A673 (cell line): ENCODE measurements at regions of chr9 and their contacts with region 1.

Region 1: GRCh38 chr9:110452227-110452801 is 114.7 kb upstream of the TXNDC8 start:
- DNase-seq: peak; percentile 17
- H3K4me3 ChIP-seq: no peak overlapping the region
- H3K27ac ChIP-seq: no peak overlapping the region
- H3K4me1 ChIP-seq: no peaks in the 10 kb centered on the region
- H3K27me3 ChIP-seq: no peaks in the 10 kb centered on the region
- CTCF ChIP-seq: peak; percentile 69

Region 2: GRCh38 chr9:110278080-110278707 is 174.1 kb before region 1 on chr9:
- CTCF ChIA-PET with region 1: no interaction called
- POLR2A ChIA-PET with region 1: no interaction called
- intact Hi-C with region 1: no loop called
- DNase-seq: no peak
- H3K4me3 ChIP-seq: no peak overlapping the region
- H3K27ac ChIP-seq: no peak overlapping the region
- H3K4me1 ChIP-seq: no peaks in the 10 kb centered on the region
- H3K27me3 ChIP-seq: no peaks in the 10 kb centered on the region
- CTCF ChIP-seq: no peak

Region 3: DNA sequence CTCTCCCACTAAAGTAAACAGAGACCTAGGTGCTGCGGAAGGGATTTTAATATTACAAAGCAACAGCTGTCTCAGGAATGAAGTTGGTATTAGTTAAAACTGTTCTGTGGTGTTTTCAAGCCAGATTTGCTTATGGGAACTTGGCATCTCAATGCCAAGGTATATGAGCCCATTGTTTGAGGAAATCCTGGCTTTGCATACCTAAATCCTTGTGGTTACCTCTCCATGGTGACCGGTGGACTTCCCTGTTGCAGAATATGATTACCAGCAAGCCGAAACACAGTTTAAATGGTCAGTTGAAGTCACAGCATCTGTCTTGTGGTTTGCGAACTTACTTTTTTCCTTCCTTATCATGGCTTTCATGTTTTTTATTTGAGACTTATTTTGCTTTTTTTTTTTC is 52.3 kb before region 1 on chr9:
- CTCF ChIA-PET with region 1: no interaction called
- POLR2A ChIA-PET with region 1: no interaction called
- intact Hi-C with region 1: no loop called
- DNase-seq: no peak
- H3K4me3 ChIP-seq: no peak overlapping the region
- H3K27ac ChIP-seq: no peak overlapping the region
- H3K4me1 ChIP-seq: no peaks in the 10 kb centered on the region
- H3K27me3 ChIP-seq: peaks cover 10% of the 10 kb centered on the region
- CTCF ChIP-seq: no peak

Region 4: DNA sequence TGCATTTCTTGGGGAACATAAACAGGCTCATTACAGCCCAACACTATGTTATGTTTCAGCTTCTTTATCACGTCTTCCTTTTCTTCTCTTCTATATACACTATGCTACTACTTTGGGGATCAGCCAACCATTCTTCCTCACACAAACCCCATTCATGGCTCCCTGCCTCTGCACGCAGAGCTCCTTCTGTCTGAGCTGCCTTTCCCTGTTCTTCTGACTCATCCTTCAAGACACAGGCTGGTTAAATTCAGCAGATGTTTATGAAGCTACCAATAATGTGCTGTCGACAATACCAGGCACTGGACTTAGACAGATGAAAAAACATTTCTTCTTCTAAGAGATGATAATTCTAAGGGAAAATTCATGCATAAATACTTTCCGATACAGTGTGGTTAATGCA is 12.1 kb before region 1 on chr9:
- CTCF ChIA-PET with region 1: interaction called, 13 read pairs
- POLR2A ChIA-PET with region 1: no interaction called
- intact Hi-C with region 1: no loop called
- DNase-seq: no peak
- H3K4me3 ChIP-seq: no peak overlapping the region
- H3K27ac ChIP-seq: no peak overlapping the region
- H3K4me1 ChIP-seq: no peaks in the 10 kb centered on the region
- H3K27me3 ChIP-seq: no peaks in the 10 kb centered on the region
- CTCF ChIP-seq: no peak

Region 5: DNA sequence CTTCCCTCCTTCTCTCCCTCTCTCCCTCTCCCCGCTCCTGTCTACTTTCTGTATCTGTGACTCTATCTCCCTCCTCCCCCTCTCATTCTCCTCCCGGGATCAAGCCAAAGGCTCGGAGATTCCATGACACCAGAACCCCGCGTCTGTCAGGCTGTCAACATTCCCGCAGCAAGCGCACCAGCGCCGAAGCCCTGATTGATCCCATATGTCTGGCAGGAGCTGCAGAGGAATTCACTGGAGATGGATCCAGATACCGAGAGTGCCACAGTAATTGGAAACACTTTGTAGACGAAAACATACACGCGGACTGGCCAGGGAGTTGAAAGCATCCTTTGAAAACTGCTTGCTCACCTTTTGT is 127.5 kb after region 1 on chr9:
- CTCF ChIA-PET with region 1: no interaction called
- POLR2A ChIA-PET with region 1: no interaction called
- intact Hi-C with region 1: loop called (anchors 10 kb)
- DNase-seq: peak; percentile 46
- H3K4me3 ChIP-seq: peak overlapping the region; percentile 50
- H3K27ac ChIP-seq: no peak overlapping the region
- H3K4me1 ChIP-seq: peaks cover 3% of the 10 kb centered on the region
- H3K27me3 ChIP-seq: peaks cover 44% of the 10 kb centered on the region
- CTCF ChIP-seq: no peak

Region 6: DNA sequence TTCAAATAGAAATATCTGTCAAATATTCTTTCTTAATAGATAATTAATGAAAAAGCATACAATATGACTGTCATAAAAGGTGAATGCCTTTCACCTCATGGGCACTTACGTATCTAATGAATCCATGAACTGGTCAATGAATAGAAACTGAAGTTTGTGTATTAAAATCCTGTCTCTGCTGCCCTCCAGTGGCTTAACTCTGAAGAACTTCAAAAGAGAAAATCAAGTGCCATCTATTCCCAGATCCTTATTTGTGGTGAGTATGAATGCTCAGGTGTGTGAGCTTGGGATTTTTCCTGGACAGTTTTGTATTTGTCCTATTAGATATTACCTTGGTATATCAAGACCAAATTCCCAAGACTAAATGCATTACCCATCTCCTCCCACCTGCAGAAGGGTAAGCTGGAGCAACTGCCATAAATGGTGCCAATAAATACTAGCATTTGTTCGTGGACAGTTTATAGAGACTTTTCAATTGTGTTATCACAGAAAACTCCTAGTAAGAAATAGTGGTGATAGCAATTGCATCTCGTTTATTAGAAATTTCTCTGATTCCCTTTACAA is 171.2 kb after region 1 on chr9:
- CTCF ChIA-PET with region 1: no interaction called
- POLR2A ChIA-PET with region 1: no interaction called
- intact Hi-C with region 1: loop called (anchors 1 kb)
- DNase-seq: peak; percentile 69
- H3K4me3 ChIP-seq: no peak overlapping the region
- H3K27ac ChIP-seq: no peak overlapping the region
- H3K4me1 ChIP-seq: peaks cover 11% of the 10 kb centered on the region
- H3K27me3 ChIP-seq: no peaks in the 10 kb centered on the region
- CTCF ChIP-seq: peak; percentile 74

Region 7: DNA sequence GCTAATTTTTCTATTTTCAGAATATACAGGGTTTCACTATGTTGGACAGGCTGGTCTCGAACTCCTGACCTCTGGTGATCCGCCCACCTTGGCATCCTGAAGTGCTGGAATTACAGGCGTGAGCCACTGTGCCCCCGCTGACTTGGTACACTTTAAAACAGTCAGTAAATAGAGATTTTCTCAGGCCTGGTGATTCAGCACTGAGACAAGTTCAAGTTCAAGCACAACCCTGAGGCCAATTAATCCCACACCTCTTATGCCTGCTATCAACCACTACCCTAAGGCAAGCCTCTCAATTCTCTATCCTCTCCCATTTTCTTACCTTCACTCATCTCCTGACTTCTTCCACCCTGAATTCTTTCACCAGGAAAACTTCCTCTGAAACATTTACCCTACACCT is 235.2 kb after region 1 on chr9:
- CTCF ChIA-PET with region 1: no interaction called
- POLR2A ChIA-PET with region 1: no interaction called
- intact Hi-C with region 1: no loop called
- DNase-seq: no peak
- H3K4me3 ChIP-seq: no peak overlapping the region
- H3K27ac ChIP-seq: no peak overlapping the region
- H3K4me1 ChIP-seq: no peaks in the 10 kb centered on the region
- H3K27me3 ChIP-seq: no peaks in the 10 kb centered on the region
- CTCF ChIP-seq: no peak

Region 8: GRCh38 chr9:110958847-110959246 is 506.5 kb after region 1 on chr9:
- CTCF ChIA-PET with region 1: no interaction called
- POLR2A ChIA-PET with region 1: no interaction called
- intact Hi-C with region 1: no loop called
- DNase-seq: peak; percentile 45
- H3K4me3 ChIP-seq: no peak overlapping the region
- H3K27ac ChIP-seq: no peak overlapping the region
- H3K4me1 ChIP-seq: no peaks in the 10 kb centered on the region
- H3K27me3 ChIP-seq: no peaks in the 10 kb centered on the region
- CTCF ChIP-seq: 0 out of 2 replicates have a peak, but pooled peaks have one; percentile 11